ENCODE measurements at regions of chr2 and their contacts with region 1.

Region 1: GRCh38 chr2:18520451-18521425 is 39.7 kb downstream of the RDH14 start:
- DNase-seq: peak; percentile 95

Region 2: GRCh38 chr2:18435421-18436037 is 85.2 kb before region 1 on chr2:
- intact Hi-C with region 1: loop called (anchors 5 to 10 kb)
- DNase-seq: no peak

Region 3: GRCh38 chr2:18491577-18491976 is 29.2 kb before region 1 on chr2:
- intact Hi-C with region 1: no loop called
- DNase-seq: no peak

Region 4: GRCh38 chr2:18501729-18502128 is 19.0 kb before region 1 on chr2:
- intact Hi-C with region 1: no loop called
- DNase-seq: no peak

Region 5: GRCh38 chr2:18719978-18720775 is 199.4 kb after region 1 on chr2:
- intact Hi-C with region 1: loop called in 1 of 2 experiments (anchors 10 kb)
- DNase-seq: no peak

Region 6: GRCh38 chr2:18741895-18742732 is 221.4 kb after region 1 on chr2:
- intact Hi-C with region 1: loop called in 1 of 2 experiments (anchors 5 kb)
- DNase-seq: no peak

Region 7: DNA sequence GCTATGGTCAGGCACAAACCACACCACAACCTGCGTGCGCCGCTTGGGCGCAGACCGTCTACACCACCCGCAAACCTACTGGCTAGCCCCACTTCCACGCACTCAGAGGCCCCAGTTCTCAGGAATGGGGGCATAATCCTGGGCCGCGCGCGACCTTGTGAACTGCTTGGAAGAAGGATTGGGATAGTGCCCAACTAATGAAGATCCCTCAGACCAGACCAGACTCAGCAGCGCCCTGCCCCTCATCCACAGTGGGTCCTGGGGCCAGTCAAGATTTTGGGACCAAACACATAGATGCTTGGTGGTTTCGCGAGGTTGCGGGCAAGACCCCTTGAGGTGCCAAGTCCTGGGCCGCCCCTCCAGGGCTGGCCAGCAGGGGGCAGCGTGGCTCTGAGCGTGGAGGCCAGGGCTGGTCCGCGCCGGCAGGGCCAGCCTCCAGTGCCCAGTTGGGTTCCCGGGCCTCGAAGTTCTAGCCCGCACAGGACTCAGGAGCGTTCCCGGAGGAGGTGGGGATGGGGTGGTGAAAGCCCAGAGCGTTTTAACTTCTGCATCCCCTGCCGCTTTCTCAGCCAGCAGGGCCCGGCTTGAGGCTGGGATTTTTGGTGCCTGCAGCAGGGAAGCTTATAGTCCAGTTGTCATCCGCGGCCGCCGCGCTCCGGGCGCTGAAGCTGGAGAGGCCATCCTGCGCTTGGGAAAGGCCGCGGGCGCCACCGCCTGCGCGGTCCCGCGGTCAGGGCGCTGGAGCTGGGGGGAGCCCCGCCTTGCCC is 829.4 kb after region 1 on chr2:
- intact Hi-C with region 1: loop called in 1 of 2 experiments (anchors 5 kb)
- DNase-seq: peak; percentile 90

Region 8: DNA sequence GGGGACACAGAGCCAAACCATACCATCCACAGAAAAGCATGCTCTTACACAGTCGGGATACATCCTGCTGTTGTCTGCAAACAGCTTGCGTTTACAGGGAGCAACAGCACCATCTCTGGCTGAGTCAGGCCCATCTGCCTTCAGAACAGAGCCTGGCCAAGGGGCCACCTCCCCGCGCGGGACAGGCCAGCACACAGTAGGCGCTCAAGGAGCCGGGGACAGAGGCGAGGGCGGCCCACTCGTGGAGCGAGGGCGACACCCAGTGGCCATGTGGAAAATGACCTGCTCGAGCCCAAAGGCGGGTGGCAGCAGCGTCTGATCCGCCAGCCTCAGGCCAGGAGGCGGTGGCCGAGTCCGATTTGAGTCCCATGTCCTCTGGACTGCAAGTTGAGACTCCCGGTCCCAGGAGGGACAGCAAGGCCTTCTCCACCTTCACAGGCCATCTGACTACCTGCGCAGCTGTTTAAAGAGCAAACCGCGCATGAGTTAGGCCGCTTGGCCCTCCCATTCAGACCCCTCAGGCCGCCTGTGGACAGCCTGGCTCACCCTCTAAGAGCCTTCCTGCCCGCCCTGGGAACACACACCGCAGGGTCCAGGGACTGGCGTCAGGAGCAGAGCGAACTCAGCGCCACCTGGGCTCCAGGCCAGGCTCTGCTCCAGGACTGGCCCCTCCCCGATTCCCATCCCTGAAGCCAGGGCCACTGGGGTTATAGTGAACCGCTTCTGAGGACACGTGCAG is 1342.7 kb after region 1 on chr2:
- intact Hi-C with region 1: loop called in 1 of 2 experiments (anchors 10 kb)
- DNase-seq: peak; percentile 93